ENCODE measurements at regions of chr16 and their contacts with region 1.

Region 1: DNA sequence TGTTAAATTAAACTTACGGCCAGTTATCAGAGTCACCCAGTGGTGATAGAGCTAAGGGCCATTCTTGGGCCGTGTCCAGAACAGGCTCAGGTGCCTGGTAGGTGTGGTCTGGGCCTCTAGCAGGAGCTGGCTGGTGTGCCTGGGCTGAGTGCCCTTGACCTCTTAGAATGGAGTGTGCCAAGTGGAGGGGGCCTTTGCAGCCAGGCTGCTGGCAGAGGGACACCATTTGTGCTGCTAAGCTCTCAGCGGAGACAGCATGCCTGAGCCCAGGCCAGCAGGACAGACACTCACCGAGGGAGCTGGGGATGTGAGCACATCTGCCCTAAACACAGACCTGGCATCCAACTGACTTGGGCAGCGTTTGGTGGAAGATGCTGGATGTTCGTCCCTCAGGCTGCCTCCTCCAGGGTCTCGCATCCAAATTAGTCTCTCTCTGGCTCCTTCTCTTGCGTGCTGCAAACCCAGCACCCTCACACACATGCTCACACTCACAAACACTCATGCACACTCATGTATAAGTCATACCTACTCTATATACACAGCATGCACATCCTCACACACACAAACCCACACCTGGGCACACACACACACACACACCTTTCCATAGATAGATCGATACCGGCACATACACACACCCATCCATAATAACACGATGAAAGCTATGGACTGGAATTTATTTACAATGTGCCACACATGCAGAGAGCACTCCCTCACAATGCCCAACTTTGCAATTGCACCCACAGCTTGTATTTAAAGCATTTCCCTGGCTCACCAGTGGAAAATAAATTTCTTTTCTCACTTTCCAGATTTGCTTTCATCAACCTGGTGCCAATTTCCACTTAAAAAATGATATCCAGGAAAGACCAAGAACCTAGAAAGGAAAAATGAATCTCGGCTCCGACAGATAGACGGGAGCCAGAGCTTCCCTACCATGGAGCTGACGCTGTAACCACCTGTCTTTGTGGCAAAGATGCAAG is 33.6 kb upstream of the CDH5 start:
- DNase-seq: no peak

Region 2: GRCh38 chr16:66357153-66357928 is 24.4 kb after region 1 on chr16:
- intact Hi-C with region 1: no loop called
- DNase-seq: no peak

Region 3: GRCh38 chr16:66369055-66369592 is 36.2 kb after region 1 on chr16:
- intact Hi-C with region 1: no loop called
- DNase-seq: peak; percentile 84

Region 4: DNA sequence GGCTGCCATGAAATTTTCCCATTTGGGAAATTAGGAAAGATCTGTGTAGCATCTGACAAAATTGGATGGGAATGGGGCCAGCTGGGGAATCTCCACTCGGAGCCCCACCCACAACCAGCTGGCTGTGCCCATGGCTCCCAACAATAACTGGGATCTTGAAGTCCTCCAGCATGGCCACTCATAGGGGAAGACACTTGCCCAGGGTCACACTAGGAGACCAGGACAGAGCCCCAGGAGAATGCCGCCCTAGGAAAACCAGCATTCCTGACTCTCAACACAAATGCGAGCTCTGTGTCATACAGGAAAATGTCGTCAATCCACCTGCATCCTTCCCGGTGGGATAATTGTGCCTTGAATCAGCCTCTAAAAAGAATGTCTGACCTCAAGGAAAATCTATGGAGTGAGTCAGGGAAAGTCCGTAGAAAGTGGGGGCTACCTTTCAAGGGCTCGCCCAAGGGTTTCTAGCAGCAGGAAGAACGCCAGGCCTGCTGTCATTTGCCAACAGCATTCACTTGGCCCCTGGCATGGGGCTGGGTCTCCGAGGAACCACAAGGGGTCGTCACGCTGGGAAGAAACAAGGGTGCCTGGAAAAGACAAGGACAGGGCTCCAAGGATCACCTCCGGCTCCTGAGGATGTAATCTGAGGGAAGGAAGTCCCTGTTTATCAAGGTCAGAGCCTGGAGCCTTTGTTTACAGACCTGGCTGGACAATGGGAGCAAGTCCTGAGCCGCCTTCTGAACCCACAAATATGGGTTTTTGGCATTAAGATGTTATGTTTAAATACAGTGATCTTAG is 49.4 kb after region 1 on chr16:
- intact Hi-C with region 1: loop called in 1 of 2 experiments (anchors 1 kb)
- DNase-seq: peak; percentile 75

Region 5: GRCh38 chr16:67000384-67001351 is 667.7 kb after region 1 on chr16:
- intact Hi-C with region 1: no loop called
- DNase-seq: no peak